ENCODE measurements at regions of chr1 and their contacts with region 1.

Region 1: GRCh38 chr1:21176586-21177555 is at the start of gene EIF4G3:
- DNase-seq: peak; percentile 100
- H3K4me3 Mint-ChIP-seq: peak within 1 kb of the TSS; percentile 84
- H3K27ac Mint-ChIP-seq: peak within 1 kb of the TSS; percentile 90
- H3K4me1 Mint-ChIP-seq: peaks cover 19% of the 10 kb centered on the region
- H3K27me3 Mint-ChIP-seq: no peaks in the 10 kb centered on the region
- total RNA-seq, gene EIF4G3: 39.9 to 42.7 TPM

Region 2: DNA sequence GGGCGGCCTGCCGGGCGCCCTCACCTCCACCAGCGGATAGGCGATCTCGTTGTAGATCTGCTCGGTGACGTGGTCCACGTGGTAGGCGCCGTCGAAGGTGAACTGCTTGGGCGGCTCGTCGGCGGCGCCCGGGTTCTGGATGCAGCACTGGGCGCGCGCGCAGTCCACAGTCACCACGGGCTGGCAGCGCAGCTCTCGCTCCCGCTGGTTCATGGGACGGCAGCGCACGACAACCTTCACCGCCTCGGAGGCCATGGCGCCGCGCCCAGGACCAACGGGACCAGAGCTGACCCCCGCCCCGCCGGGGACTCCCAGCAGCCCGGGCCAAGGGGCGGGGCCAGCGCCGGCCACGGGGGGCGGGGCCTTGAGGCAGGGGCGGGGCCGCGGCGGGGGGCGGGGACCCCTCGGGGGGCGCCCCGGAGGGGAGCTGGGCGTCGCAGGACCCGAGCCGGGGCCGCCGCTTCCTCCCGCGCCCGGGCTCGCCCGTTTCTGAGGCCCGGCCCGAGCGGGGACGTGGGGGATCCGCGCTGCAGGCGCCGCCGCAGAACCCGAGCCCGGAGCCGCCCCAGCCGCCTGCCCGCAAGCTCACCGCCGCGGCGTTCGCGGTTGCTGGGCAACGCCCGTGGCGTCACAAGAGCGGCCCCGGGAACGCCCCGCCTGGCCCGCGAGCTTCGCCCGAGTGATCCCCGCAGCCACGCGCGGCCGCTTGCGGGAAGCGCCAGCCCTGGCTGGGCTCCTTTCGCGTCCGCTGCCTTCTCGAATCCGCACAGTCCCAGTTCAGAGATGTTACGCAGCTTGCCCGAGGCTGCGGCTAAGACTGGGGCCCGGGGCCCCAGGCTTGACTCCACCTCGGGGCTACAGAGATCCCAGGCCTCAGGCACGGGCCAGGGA is 459.2 kb before region 1 on chr1 and contains the start of gene KIF17:
- CTCF ChIA-PET with region 1: no interaction called
- POLR2A ChIA-PET with region 1: no interaction called
- intact Hi-C with region 1: loop called (anchors 10 kb)
- DNase-seq: peak; percentile 73
- H3K4me3 Mint-ChIP-seq: peak within 1 kb of the TSS; percentile 39
- H3K27ac Mint-ChIP-seq: no peak within 1 kb of the TSS
- H3K4me1 Mint-ChIP-seq: peaks cover 6% of the 10 kb centered on the region
- H3K27me3 Mint-ChIP-seq: peaks cover 22% of the 10 kb centered on the region
- total RNA-seq, gene KIF17: not detected

Region 3: DNA sequence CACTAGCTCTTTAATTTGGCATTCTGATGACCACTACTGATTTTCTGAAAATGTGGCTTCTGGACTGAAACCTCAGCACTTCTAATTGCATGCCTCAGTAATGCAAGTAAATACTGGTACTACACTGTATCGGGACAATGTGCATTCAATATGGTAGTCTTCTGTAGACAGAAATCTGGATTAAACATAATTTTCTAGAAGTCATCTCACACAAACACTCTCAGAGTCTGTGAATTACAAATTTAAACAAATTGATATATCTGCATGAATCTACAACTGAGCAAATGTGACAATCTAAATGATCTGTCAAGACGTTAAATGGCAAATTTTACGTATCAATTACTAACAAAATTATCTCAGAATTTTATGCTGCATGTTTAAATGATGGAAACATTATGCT is 413.5 kb before region 1 on chr1:
- CTCF ChIA-PET with region 1: no interaction called
- POLR2A ChIA-PET with region 1: no interaction called
- intact Hi-C with region 1: no loop called
- DNase-seq: no peak
- H3K4me3 Mint-ChIP-seq: no peak overlapping the region
- H3K27ac Mint-ChIP-seq: no peak overlapping the region
- H3K4me1 Mint-ChIP-seq: no peaks in the 10 kb centered on the region
- H3K27me3 Mint-ChIP-seq: no peaks in the 10 kb centered on the region

Region 4: DNA sequence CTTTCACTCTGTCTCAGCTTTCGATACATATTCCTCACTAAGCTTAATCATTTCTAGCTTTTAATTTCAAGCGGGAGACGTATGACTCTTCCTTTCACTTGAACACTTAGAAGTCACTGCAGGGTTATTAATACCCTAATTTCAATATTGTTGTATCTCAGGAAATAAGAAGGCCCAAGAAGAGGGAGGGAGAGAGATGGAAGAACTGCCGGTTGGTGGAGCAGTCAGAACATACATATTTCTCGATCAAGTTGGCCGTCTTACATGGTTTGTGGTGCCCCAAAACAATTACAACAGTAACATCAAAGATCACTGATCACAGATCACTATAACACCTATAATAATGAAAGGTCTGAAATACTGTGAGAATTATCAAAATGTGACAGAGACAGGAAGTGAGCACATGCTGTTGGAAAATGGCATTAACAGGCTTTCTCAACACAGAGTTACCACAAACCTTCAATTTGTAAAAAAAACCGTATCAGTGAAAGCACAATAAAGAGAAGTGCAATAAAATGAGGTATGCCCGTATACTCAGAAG is 244.4 kb before region 1 on chr1:
- CTCF ChIA-PET with region 1: no interaction called
- POLR2A ChIA-PET with region 1: interaction called, 4 read pairs
- intact Hi-C with region 1: loop called (anchors 2 kb)
- DNase-seq: peak; percentile 64
- H3K4me3 Mint-ChIP-seq: peak overlapping the region; percentile 17
- H3K27ac Mint-ChIP-seq: peak overlapping the region; percentile 82
- H3K4me1 Mint-ChIP-seq: peaks cover 37% of the 10 kb centered on the region
- H3K27me3 Mint-ChIP-seq: no peaks in the 10 kb centered on the region

Region 5: GRCh38 chr1:21121764-21122471 is 55.0 kb before region 1 on chr1:
- CTCF ChIA-PET with region 1: no interaction called
- POLR2A ChIA-PET with region 1: no interaction called
- intact Hi-C with region 1: no loop called
- DNase-seq: no peak
- H3K4me3 Mint-ChIP-seq: no peak overlapping the region
- H3K27ac Mint-ChIP-seq: no peak overlapping the region
- H3K4me1 Mint-ChIP-seq: no peaks in the 10 kb centered on the region
- H3K27me3 Mint-ChIP-seq: no peaks in the 10 kb centered on the region

Region 6: GRCh38 chr1:21189906-21190500 is 13.1 kb after region 1 on chr1:
- CTCF ChIA-PET with region 1: interaction called, 36 read pairs
- POLR2A ChIA-PET with region 1: no interaction called
- intact Hi-C with region 1: no loop called
- DNase-seq: no peak
- H3K4me3 Mint-ChIP-seq: no peak overlapping the region
- H3K27ac Mint-ChIP-seq: no peak overlapping the region
- H3K4me1 Mint-ChIP-seq: no peaks in the 10 kb centered on the region
- H3K27me3 Mint-ChIP-seq: peaks cover 5% of the 10 kb centered on the region

Region 7: DNA sequence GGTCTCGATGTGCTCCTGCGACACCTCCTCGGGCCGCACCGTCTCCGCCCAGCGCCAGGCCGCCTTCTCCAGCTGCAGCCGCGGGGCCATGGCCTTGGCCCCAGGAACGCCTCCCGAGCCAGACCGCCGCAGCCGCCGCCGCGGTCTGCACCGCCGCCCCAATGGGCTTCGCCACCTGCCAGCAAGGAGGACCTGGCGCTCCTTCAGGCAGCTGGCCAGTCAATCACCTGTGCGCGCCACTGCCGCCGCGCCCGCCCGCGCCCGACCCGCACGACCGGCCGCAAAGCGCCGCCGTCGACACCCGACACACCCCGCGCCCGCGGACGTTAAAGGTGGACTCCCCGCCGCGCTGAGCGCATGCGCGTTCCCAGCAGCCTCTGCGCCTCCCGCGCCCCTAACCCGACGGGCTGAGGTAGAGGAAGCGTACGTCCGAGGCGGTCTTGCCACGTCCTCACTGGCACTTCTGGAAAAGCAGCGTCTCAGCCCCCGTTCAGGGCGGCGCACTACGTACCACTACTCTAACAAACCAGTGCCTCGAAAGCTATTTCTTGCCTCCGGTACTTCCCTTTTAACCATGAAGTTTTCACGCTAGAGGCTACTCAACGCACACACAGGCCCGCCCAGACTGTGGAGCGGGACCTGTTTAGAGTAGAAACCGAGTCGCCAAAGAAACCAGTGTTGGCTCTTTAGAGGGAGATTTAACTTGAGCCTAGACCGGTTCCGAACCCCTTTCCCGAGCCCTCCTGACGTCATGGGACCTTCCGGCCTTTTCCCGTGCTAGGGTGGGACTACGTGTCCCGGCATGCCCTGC is 606.2 kb after region 1 on chr1 and contains the start of gene USP48:
- CTCF ChIA-PET with region 1: no interaction called
- POLR2A ChIA-PET with region 1: no interaction called
- intact Hi-C with region 1: loop called (anchors 5 kb)
- DNase-seq: peak; percentile 98
- H3K4me3 Mint-ChIP-seq: peak within 1 kb of the TSS; percentile 94
- H3K27ac Mint-ChIP-seq: peak within 1 kb of the TSS; percentile 97
- H3K4me1 Mint-ChIP-seq: peaks cover 21% of the 10 kb centered on the region
- H3K27me3 Mint-ChIP-seq: no peaks in the 10 kb centered on the region
- total RNA-seq, gene USP48: 77.2 to 91.1 TPM

Measured in activated CD4-positive, alpha-beta memory T cell treated with anti-CD3 and anti-CD28 coated beads for 36 hours (primary cell).